Endothelial cell of umbilical vein (primary cell): ENCODE measurements at regions of chr5 and their contacts with region 1.

Region 1: DNA sequence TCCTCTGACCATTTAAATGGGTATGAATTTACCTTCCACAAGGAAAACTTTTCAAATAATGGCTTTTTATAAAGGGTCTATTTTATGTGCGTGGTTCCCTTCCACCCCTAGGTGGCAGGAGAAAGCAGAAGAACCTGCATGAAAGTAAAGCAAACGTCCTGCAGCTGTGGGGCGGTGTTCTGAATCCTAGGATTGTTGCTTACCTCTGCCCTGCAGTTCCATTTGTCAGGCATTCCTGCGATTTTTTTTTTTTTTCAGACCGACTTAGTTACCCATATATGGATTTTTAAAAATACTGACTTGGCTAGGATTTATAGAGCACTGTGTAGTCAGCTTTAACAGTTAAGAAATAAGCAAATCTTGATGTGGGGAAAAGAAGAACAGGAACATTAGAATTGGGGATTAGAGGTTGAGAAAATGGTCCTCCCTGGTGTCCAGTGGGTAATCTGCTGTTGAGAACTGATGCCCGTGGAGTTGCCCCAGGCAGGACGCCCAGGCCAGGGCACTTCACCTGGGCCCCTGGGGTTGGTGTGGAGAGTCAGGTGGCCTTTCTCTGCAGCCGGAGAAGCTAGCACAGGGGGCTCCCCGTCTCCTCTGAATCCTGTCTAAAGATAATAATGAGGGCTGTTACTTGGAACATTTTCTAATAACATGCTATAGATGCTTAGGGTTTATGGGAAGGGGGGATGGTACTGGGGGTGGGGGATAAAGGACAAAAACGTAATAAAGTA is 30.4 kb upstream of the LTC4S start:
- DNase-seq: peak; percentile 85
- H3K4me3 ChIP-seq: no peak overlapping the region
- H3K27ac ChIP-seq: no peak overlapping the region
- H3K4me1 ChIP-seq: peaks cover 55% of the 10 kb centered on the region
- H3K27me3 ChIP-seq: no peaks in the 10 kb centered on the region
- CTCF ChIP-seq: peak; percentile 77 to 85
- POLR2A ChIP-seq: no peak

Region 2: DNA sequence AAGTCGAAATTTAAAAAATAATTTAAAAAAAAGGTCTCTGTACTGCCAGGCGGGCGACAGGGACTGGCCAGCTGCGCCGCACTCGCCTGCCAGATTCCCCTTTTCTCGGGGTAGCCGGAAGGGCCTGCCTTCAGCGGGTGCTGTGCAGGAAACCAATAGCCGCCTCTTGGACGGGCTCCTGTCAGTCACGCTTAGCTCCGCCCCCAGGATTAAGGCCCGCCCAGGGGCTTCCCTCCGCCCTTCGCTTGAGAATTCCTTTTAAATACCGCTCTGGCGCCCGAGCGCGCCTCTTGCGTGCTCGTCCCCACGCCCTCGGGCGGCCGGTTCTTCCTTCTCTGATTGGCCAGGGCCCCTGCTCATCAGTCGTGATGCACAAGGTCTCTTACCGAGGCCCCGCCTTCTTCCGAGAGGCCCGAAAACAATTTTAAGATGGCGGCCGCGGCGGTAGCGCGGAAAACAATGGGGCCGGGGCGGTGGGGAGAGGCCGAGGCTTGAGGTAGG is 30.9 kb before region 1 on chr5 and contains the start of gene MAML1:
- CTCF ChIA-PET with region 1: interaction called, 19 read pairs
- POLR2A ChIA-PET with region 1: no interaction called
- dilution Hi-C with region 1: no loop called
- intact Hi-C with region 1: loop called (anchors 1 kb)
- DNase-seq: peak; percentile 100
- H3K4me3 ChIP-seq: peak within 1 kb of the TSS; percentile 64 to 92 (median 77)
- H3K27ac ChIP-seq: peak within 1 kb of the TSS; percentile 70
- H3K4me1 ChIP-seq: peaks cover 28% of the 10 kb centered on the region
- H3K27me3 ChIP-seq: no peaks in the 10 kb centered on the region
- CTCF ChIP-seq: no peak
- POLR2A ChIP-seq: peak; percentile 83
- total RNA-seq, gene MAML1: 29.0 and 30.1 TPM in 2 replicates

Region 3: DNA sequence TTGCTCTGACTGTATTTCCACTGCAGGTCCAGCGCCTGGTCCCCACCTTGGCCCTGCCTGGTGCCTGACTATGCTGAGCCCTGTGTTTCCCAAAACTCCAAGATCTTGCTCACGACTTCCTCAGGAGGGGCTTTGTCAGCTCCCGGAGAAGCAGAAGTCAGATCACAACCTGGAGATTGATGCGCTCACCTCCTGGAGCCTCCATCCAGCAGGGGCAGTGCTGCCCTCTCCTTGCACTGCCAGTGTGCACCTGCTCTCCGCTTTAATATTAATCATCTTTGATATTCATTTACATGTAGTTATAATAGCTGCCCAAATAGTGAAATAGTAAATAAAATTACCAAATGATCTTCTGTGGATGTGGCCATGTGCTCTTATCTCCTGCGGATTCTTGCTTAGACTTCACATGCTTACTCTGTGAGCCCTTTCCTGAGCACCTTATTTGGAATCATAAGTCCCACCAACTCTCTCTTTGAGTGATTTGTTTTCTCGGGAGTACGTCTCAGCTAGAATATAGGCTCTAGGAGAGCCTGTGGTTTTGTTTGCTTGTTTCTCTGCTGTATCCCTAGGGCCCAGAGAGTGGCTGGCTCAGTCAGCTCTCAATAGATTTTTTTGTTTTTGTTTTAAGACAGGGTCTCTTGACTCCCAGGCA is 13.4 kb before region 1 on chr5:
- CTCF ChIA-PET with region 1: interaction called, 15 read pairs
- POLR2A ChIA-PET with region 1: interaction called, 5 read pairs
- dilution Hi-C with region 1: no loop called
- intact Hi-C with region 1: no loop called
- DNase-seq: no peak
- H3K4me3 ChIP-seq: no peak overlapping the region
- H3K27ac ChIP-seq: no peak overlapping the region
- H3K4me1 ChIP-seq: no peaks in the 10 kb centered on the region
- H3K27me3 ChIP-seq: no peaks in the 10 kb centered on the region
- CTCF ChIP-seq: no peak
- POLR2A ChIP-seq: no peak

Region 4: DNA sequence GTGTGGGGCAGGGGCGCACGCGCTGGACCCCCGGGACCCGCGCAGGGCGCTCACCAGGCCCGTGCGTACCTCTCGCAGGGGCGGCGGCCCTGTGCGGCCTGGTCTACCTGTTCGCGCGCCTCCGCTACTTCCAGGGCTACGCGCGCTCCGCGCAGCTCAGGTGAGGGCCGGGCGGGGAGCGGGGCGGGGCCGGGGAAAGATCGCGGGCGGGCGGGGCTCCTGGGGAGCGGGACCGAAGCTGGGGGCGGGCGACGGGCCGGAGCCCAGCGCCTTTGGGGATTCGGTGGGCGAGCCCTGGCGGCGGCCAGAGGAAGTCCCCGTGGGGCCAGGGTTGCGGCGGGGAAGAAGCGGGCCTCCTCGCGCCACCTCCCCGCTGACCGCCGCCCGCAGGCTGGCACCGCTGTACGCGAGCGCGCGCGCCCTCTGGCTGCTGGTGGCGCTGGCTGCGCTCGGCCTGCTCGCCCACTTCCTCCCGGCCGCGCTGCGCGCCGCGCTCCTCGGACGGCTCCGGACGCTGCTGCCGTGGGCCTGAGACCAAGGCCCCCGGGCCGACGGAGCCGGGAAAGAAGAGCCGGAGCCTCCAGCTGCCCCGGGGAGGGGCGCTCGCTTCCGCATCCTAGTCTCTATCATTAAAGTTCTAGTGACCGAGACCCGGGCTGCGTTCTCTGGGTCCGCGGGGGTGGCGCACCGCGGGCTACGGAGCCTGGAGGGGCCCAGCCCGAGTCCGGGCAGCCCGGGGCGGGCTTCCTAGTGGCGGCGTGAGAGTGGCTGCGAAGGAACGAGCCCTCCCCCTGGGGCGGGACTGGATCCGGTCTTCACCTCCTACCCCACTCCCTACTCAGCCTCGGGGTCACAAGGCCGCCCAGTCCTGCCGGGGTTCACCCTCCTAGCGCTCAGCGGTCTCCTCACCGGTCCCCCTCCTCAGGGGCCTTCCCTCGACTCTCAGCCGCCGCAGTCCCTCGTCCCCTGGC is 32.8 kb after region 1 on chr5:
- CTCF ChIA-PET with region 1: interaction called, 103 read pairs
- POLR2A ChIA-PET with region 1: no interaction called
- dilution Hi-C with region 1: no loop called
- intact Hi-C with region 1: loop called (anchors 1 kb)
- DNase-seq: peak; percentile 78
- H3K4me3 ChIP-seq: peak overlapping the region; percentile 14 to 57 (median 38)
- H3K27ac ChIP-seq: no peak overlapping the region
- H3K4me1 ChIP-seq: peaks cover 10% of the 10 kb centered on the region
- H3K27me3 ChIP-seq: no peaks in the 10 kb centered on the region
- CTCF ChIP-seq: peak; percentile 70 to 83
- POLR2A ChIP-seq: peak; percentile 61

Region 5: DNA sequence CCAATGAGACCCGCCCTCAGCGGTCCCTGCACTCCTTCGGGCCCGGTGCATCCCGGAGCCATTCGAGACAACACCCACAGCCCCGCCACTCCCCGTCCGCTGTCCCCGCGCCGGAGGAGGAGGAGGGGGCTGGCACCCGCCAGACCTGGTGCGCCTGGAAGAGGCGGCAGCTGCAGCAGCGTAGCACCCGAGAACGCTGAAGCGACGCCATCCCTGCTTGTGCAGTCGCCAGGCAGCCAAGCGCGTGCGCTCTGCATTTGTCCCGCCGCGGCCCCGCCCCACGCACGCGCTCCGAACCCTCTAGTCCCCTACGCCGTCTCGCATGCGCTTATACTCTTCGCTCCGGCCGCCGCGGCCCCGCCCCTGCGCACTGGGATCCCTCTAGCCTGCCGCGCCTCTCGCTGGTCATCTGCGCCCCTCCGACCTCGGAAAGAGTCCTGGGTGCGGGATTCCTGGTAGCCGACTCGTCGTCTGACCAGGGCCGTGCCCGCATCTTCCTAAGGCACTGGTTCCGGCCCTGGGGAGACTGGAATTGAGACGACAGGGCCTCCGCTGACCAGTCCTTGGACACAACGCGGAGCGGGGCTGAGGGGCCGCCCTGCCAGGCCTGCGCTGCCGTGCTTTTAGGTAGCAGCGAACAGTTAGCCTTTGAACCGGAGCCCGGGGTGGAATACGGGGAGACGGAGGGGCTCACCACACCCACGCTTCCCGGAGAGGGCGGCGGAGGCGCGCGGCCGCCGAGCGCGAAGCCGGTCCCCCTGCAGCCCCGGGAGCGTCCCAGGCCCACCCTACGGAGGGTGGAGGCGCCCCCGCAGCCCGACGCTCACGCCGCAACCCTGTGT is 95.4 kb after region 1 on chr5 and contains the start of gene MRNIP:
- CTCF ChIA-PET with region 1: no interaction called
- POLR2A ChIA-PET with region 1: no interaction called
- dilution Hi-C with region 1: no loop called
- intact Hi-C with region 1: loop called (anchors 2 kb)
- DNase-seq: peak; percentile 97
- H3K4me3 ChIP-seq: peak within 1 kb of the TSS; percentile 60 to 97 (median 75)
- H3K27ac ChIP-seq: no peak within 1 kb of the TSS
- H3K4me1 ChIP-seq: no peaks in the 10 kb centered on the region
- H3K27me3 ChIP-seq: no peaks in the 10 kb centered on the region
- CTCF ChIP-seq: peak in 1 of 2 donors; percentile 9
- POLR2A ChIP-seq: peak; percentile 82
- total RNA-seq, gene MRNIP: 17.6 and 19.1 TPM in 2 replicates

Region 6: GRCh38 chr5:180090098-180090768 is 326.9 kb after region 1 on chr5:
- CTCF ChIA-PET with region 1: interaction called, 11 read pairs
- POLR2A ChIA-PET with region 1: no interaction called
- dilution Hi-C with region 1: no loop called
- intact Hi-C with region 1: loop called (anchors 2 kb)
- DNase-seq: peak; percentile 77
- H3K4me3 ChIP-seq: peak overlapping the region; percentile 41 to 76 (median 72)
- H3K27ac ChIP-seq: peak overlapping the region; percentile 49
- H3K4me1 ChIP-seq: peaks cover 4% of the 10 kb centered on the region
- H3K27me3 ChIP-seq: peaks cover 1 to 4% of the 10 kb centered on the region in 2 experiments
- CTCF ChIP-seq: peak; percentile 79 to 85
- POLR2A ChIP-seq: no peak